ENCODE measurements at regions of chr18 and their contacts with region 1.

Region 1: DNA sequence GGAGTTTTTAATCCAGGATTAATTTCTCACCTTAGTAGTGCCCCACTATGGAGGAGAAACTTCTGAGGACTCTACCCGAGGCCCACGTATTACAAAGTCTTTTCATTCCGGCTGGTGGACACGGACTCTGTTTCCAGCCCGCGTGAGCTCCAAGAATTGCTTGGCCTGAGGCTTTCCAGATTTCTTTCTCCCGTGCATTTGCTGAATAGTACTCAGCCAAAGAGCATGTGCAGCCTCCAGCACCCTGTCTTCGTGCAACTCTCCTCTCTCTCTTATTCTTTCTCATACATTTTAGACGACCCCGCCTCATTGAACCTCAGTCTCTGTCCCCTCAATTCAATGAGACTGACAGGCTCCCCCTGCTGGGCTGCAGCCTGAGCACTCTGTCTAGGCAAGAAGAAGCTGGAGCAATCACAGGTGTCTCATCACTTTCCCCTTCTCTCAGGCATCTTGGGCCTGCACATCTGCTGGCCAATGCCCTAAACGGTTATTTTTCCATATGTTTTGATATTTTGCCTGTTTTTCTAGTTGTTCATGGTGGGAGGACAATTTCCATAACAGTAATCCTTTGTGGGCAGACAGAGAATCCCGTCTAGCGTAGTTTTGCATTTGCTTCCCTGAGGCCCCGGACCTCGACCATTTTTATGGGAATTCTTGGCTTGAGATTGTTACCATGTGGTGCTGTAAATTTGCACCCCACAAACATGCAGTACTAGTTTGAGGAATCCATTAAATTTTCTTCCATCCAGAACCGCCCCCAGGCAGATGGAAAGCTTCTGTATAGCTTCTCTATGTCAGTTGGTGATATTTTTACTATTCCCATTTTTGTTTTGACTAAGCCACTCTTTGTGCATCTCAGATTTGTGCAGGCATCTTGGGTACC is 50.1 kb upstream of the LPIN2 start:
- DNase-seq: peak; percentile 81
- ATAC-seq: peak; percentile 73

Region 2: DNA sequence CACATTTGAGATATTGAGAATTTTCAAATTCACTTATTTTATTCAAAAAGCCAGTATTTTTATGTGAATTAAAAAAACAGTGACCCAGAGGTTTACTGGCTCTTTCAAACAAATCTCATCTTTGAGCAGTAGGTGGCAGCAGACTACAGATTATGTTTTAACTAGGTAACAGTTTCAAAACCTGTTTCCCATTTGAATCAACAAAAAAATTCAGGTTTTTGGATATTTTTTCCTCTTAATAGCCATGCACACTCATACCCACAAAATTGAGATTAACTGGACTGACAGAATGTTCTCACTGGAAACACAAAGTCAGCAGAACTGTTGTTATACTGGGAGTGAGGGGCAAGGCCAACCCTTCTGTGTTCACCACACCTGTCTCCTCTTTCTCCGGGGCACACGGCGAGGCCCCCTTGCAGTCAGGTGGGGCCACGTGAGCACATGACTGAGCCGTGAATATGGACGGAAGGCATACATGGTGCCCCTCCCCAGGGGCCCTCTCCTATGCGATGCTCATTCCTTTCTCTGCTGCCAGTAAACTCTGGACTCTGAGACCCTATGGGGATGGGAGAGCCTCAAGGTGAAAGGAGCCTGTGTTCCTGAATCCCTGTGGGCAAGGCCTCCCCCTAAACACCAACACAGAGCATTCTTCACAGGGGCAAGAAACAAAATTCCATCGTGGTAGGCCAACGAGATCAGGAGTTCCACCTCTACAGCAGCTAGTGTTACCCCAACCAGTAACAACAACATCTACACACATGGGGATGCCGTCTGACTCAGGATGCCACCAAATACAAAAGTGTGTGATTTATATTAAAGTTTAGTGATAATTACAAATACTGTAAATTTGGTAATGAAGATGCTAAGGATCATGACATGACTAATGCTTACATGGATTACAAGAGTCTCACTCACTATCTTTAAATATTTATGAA is 130.5 kb before region 1 on chr18:
- intact Hi-C with region 1: loop called (anchors 5 kb)
- DNase-seq: no peak
- ATAC-seq: peak; percentile 52

Measured in left ventricle myocardium superior (tissue), 1 donor.